ENCODE measurements at regions of chr10 and their contacts with region 1.

Region 1: DNA sequence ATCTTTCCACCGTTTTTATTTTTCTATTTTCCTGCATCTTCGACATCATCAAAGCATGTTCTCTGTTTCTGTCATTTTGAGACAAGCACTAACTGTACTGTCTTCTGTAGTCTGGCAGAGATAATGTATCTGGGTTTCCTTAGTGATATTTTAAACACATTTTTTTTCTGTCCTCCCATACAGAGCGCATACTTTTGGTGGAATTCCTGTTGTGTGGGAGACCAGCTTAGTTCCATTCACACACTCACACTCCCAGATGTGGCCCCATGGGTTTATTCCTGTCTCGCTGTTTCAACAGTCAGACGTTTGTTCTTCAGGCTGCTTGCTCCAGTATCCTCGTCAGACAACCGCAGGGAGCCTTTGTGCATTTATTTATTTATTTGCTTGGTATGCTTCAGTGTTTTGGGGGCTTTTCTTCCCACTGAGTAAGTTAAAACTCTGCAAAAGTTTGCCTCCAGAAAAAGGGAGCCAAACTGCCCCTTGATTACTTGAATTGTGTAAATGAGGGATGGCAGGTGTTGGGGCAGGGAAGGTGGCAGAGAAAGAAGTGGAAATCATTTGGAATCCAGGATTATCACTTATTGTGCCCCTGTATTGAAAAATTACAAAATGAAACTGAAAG is 456.8 kb upstream of the KLF6 start:
- DNase-seq: peak in 1 of 2 donors; percentile 76
- H3K4me3 ChIP-seq: peak overlapping the region; percentile 53 to 61
- H3K27ac ChIP-seq: peak overlapping the region; percentile 87 to 94
- H3K4me1 ChIP-seq: peaks cover 0 to 18% of the 10 kb centered on the region in 2 donors
- H3K27me3 ChIP-seq: no peaks in the 10 kb centered on the region
- CTCF ChIP-seq: no peak

Region 2: GRCh38 chr10:3776796-3777571 is 464.9 kb before region 1 on chr10:
- intact Hi-C with region 1: loop called (anchors 2 kb)
- DNase-seq: peak; percentile 53 to 92
- H3K4me3 ChIP-seq: peak overlapping the region; percentile 79 to 99
- H3K27ac ChIP-seq: peak overlapping the region; percentile 92 to 97
- H3K4me1 ChIP-seq: peaks cover 21 to 45% of the 10 kb centered on the region in 2 donors
- H3K27me3 ChIP-seq: no peaks in the 10 kb centered on the region
- CTCF ChIP-seq: no peak

Region 3: GRCh38 chr10:3887885-3888476 is 353.9 kb before region 1 on chr10:
- intact Hi-C with region 1: loop called (anchors 5 kb)
- DNase-seq: peak; percentile 65 to 95
- H3K4me3 ChIP-seq: no peak overlapping the region
- H3K27ac ChIP-seq: peak overlapping the region; percentile 87
- H3K4me1 ChIP-seq: peaks cover 3 to 30% of the 10 kb centered on the region in 2 donors
- H3K27me3 ChIP-seq: no peaks in the 10 kb centered on the region
- CTCF ChIP-seq: no peak

Region 4: DNA sequence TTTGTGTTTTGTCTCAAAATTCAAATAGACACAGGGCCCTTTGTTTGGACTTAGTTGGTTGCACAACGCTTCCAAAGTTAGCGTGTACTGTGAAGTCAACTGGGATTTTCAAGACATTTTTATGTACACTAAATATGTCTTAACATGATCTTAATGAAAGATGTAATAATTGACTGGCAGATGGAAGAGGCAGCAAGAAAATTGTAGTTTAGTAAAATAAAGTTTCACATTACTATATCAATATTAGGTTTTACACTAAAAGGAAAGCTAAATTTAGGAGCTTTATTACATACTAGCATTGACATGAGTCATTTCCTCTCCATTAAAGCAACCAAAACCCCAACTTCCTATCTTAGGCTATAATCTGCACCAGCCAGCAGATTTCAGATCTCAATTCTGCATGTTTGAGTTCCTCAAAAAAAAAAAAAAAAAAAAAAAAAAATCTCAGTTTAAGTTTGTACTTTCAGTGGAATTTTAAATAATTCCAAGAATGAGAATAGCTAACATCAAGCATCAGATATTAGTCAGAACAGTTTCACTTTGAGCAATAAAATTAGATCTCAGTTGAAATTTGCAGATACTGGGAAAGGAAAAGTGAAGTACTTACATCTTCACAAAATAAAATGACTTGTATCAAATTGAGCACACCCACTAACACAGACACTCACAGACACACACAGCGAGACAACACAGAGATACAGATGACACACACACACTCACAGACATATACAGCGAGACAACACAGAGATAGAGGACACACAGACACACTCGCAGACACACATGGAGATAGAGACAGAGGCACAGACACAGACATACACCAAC is 110.2 kb before region 1 on chr10:
- intact Hi-C with region 1: loop called (anchors 5 kb)
- DNase-seq: no peak
- H3K4me3 ChIP-seq: no peak overlapping the region
- H3K27ac ChIP-seq: peak overlapping the region; percentile 70 to 73
- H3K4me1 ChIP-seq: peaks cover 9 to 17% of the 10 kb centered on the region in 2 donors
- H3K27me3 ChIP-seq: no peaks in the 10 kb centered on the region
- CTCF ChIP-seq: no peak

Region 5: GRCh38 chr10:4303048-4303447 is 61.2 kb after region 1 on chr10:
- intact Hi-C with region 1: no loop called
- DNase-seq: no peak
- H3K4me3 ChIP-seq: no peak overlapping the region
- H3K27ac ChIP-seq: no peak overlapping the region
- H3K4me1 ChIP-seq: peaks cover 0 to 7% of the 10 kb centered on the region in 2 donors
- H3K27me3 ChIP-seq: no peaks in the 10 kb centered on the region
- CTCF ChIP-seq: no peak

Region 6: GRCh38 chr10:4391683-4392082 is 149.8 kb after region 1 on chr10:
- intact Hi-C with region 1: no loop called
- DNase-seq: no peak
- H3K4me3 ChIP-seq: no peak overlapping the region
- H3K27ac ChIP-seq: no peak overlapping the region
- H3K4me1 ChIP-seq: no peaks in the 10 kb centered on the region
- H3K27me3 ChIP-seq: no peaks in the 10 kb centered on the region
- CTCF ChIP-seq: no peak

Region 7: DNA sequence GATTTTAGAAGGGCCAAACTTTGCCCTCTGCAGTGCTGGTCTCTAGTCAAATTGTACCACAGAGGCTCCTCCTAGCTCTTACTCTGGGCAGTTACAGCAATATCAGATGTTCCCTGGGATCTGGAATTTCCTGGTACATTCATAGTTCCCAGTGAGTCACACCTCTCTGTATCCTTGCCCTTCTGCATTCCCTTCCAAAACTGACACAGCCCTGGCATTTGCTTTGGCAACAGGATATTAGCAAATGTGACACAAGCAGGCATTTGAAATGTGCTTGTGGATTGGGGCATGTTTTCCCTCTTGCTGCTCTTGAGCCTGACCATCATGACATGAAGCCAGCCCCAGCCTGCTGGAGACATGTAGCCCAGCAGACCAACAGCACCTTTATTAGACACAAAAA is 299.5 kb after region 1 on chr10:
- intact Hi-C with region 1: loop called (anchors 5 kb)
- DNase-seq: peak; percentile 41 to 93
- H3K4me3 ChIP-seq: no peak overlapping the region
- H3K27ac ChIP-seq: peak overlapping the region; percentile 81 to 94
- H3K4me1 ChIP-seq: peaks cover 5 to 12% of the 10 kb centered on the region in 2 donors
- H3K27me3 ChIP-seq: no peaks in the 10 kb centered on the region
- CTCF ChIP-seq: peak; percentile 29 to 46 (median 37)

Measured in ascending aorta (tissue), 2 donors.